ENCODE measurements at regions of chr19 and their contacts with region 1.

Region 1: DNA sequence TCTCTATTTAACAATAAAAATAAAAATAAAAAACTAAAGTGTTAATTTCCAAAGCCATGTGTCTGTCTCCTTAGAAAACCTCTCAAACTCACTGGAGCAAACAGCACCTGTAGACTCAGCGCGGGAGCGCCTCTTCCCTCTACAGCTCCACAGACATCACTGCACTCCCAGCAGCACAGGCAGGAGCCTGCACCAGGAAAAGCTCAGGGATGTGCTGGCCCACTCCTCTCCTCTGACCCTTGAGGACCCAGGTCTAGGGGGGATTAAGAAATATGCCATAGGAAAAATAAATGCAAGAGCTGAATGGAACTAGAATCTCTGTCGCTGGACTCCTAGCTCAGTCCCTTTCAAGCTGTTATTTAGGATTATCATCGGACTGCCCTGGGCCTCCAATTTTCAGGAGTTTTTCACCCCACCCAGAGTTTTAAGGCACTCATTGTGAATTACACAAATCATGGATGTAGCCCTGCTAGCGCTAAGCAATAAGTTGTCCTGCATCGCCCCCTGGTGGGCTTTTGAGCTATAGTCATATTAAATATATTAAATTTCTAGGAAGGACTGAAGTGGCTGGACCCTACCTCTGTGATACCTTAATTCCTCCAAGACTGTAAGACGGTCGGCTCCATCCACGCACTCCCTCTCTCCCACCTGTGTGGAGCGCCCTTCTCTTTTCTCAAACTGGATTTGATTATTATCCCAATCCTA is 333.9 kb downstream of the UQCRFS1 start:
- DNase-seq: peak; percentile 52
- ATAC-seq: peak; percentile 75
- H3K4me3 ChIP-seq: no peak overlapping the region
- H3K27ac ChIP-seq: no peak overlapping the region
- H3K4me1 ChIP-seq: no peaks in the 10 kb centered on the region
- H3K27me3 ChIP-seq: no peaks in the 10 kb centered on the region; a peak in 2 of 5 replicates
- CTCF ChIP-seq: peak; percentile 59
- EP300 ChIP-seq: no peak
- POLR2A ChIP-seq: no peak
- RAD21 ChIP-seq: no peak

Region 2: GRCh38 chr19:27966390-27966816 is 912.6 kb before region 1 on chr19:
- CTCF ChIA-PET with region 1: interaction called, 5 read pairs
- POLR2A ChIA-PET with region 1: no interaction called
- in situ Hi-C with region 1: no loop called
- intact Hi-C with region 1: loop called (anchors 5 kb)
- DNase-seq: no peak
- ATAC-seq: no peak
- H3K4me3 ChIP-seq: no peak overlapping the region
- H3K27ac ChIP-seq: no peak overlapping the region
- H3K4me1 ChIP-seq: no peaks in the 10 kb centered on the region
- H3K27me3 ChIP-seq: no peaks in the 10 kb centered on the region
- CTCF ChIP-seq: peak; percentile 42
- EP300 ChIP-seq: no peak
- POLR2A ChIP-seq: no peak
- RAD21 ChIP-seq: no peak

Region 3: DNA sequence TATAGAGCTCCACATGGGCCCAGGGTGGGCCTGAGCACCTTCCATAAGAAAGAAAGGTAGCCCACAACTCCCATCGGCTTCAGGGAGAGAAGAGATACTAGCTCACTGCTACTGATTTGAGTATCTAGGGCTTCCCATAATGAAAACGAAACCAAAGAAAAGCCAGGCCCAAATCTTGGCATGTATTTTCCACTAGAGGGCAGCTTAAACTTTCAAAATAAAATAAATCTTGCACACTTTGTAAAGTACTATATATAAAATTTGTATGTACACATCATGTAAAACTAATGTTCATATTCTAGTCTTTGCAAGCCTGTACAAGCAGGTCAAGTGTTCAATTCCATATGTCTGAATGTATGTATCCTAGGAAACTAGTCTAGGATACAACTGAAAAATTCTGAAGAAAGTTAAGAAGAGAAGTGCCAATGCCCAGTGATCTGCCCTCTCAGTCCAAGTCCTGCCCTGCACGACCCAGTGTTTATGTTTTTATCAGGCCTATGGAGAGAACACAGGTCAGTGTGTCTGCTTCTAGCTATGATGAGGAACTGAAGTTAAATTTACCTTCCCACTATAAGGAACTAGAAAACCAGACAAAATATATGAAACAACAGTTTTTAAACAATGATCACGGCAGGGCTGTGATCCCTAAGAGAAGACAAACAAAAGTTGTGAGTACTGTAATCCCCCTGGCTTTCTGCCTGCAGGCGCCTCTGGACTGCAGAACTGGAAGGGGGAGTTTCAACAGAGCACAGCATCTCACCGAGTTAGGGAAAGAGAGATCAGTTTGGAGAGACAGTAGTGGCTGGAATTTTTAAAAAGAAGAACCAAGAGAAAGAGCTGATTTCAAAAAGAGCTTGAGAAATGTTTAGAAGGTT is 141.8 kb before region 1 on chr19:
- CTCF ChIA-PET with region 1: interaction called, 5 read pairs
- POLR2A ChIA-PET with region 1: no interaction called
- in situ Hi-C with region 1: loop called (anchors 10 kb)
- intact Hi-C with region 1: loop called (anchors 1 kb)
- DNase-seq: peak; percentile 15
- ATAC-seq: peak; percentile 69
- H3K4me3 ChIP-seq: no peak overlapping the region; a peak in 2 of 6 replicates
- H3K27ac ChIP-seq: no peak overlapping the region
- H3K4me1 ChIP-seq: no peaks in the 10 kb centered on the region
- H3K27me3 ChIP-seq: no peaks in the 10 kb centered on the region
- CTCF ChIP-seq: peak; percentile 37
- EP300 ChIP-seq: no peak
- POLR2A ChIP-seq: no peak
- RAD21 ChIP-seq: no peak